PC-9 (cell line): ENCODE measurements at regions of chr15 and their contacts with region 1.

Region 1: GRCh38 chr15:59420986-59421618 is 16.9 kb upstream of the FAM81A start:
- DNase-seq: no peak
- H3K4me3 ChIP-seq: no peak overlapping the region
- H3K27ac ChIP-seq: no peak overlapping the region
- H3K4me1 ChIP-seq: peaks cover 12% of the 10 kb centered on the region
- H3K27me3 ChIP-seq: no peaks in the 10 kb centered on the region
- CTCF ChIP-seq: no peak

Region 2: GRCh38 chr15:58724466-58724865 is 696.6 kb before region 1 on chr15:
- CTCF ChIA-PET with region 1: no interaction called
- POLR2A ChIA-PET with region 1: no interaction called
- intact Hi-C with region 1: no loop called
- DNase-seq: peak in 1 of 2 experiments; percentile 35
- H3K4me3 ChIP-seq: no peak overlapping the region
- H3K27ac ChIP-seq: peak overlapping the region; percentile 43; the same call in 1 of the 2 replicates
- H3K4me1 ChIP-seq: no peaks in the 10 kb centered on the region
- H3K27me3 ChIP-seq: no peaks in the 10 kb centered on the region
- CTCF ChIP-seq: no peak

Region 3: GRCh38 chr15:59388670-59389069 is 32.4 kb before region 1 on chr15:
- CTCF ChIA-PET with region 1: no interaction called
- POLR2A ChIA-PET with region 1: no interaction called
- intact Hi-C with region 1: loop called (anchors 5 kb)
- DNase-seq: peak in 1 of 2 experiments; percentile 52
- H3K4me3 ChIP-seq: no peak overlapping the region
- H3K27ac ChIP-seq: peak overlapping the region; percentile 11; the same call in 1 of the 2 replicates
- H3K4me1 ChIP-seq: peaks cover 9% of the 10 kb centered on the region
- H3K27me3 ChIP-seq: no peaks in the 10 kb centered on the region
- CTCF ChIP-seq: no peak

Region 4: DNA sequence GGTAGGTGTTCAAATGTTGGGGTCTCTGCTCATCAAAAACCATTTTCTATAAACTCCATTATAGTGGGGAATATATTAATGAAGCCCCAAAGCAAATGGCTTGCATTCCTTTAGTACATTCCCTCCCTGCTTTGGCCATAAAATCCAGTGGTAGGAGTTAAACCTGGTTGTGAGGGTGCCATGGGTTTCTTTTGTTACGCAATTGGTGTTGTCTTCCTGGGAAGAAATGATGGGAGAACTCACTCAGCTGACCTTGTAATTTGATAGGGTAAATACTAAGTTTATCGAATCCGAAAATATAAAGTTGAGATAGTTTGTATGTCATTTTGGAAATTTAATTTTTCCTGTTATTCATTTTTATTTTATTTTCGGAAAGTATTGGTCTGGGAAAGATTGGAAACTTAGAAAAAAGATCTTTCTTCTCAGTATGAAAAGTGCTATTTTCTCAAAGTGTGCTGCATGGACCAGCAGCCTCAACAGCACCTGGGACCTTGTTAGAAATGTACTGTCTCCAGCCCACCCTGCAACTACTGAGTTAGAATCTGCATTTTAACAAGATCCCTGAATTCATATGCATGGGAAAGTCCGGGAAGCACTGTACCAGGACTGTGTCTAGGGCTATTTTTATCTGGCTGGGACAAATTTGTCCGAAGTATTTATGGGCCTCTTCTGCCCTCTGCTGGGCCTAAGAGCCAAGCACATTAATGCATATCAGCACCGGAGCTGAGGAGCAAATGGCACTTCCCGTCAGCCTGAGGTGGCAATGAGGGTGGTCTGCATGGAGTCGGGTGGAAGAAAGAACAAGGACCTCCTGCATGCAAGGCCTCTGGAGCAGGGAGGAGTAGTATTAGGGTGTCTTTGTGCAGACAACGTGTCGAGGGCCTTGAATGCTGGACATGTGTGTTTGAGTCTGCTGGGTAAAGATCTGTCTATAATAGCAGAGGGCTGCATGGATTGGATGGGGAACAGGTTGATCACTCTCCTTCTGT is 71.6 kb after region 1 on chr15:
- CTCF ChIA-PET with region 1: no interaction called
- POLR2A ChIA-PET with region 1: no interaction called
- intact Hi-C with region 1: no loop called
- DNase-seq: peak in 1 of 2 experiments; percentile 54
- H3K4me3 ChIP-seq: no peak overlapping the region
- H3K27ac ChIP-seq: no peak overlapping the region
- H3K4me1 ChIP-seq: 0 out of 2 replicates have a peak, but pooled peaks cover 4% of the 10 kb centered on the region
- H3K27me3 ChIP-seq: no peaks in the 10 kb centered on the region
- CTCF ChIP-seq: peak; percentile 84